Activated T-helper 1 cell treated with anti-CD3 and anti-CD28 coated beads, Interleukin-12 subunit alpha, Interleukin-12 subunit beta, Interleukin-2, Interleukin-4 antibody, amounts not matched to agents 30 ng/mL and 10 ng/mL and 1 ng/mL, durations not matched to agents 14 hours and 24 hours and 36 hours (primary cell): ENCODE measurements at regions of chr1 and their contacts with region 1.

Region 1: GRCh38 chr1:89611721-89612120 is 21.2 kb upstream of the LRRC8C start:
- DNase-seq: no peak
- H3K4me3 Mint-ChIP-seq: peak overlapping the region; percentile 73
- H3K27ac Mint-ChIP-seq: peak overlapping the region; percentile 99
- H3K4me1 Mint-ChIP-seq: peaks cover 88% of the 10 kb centered on the region
- H3K27me3 Mint-ChIP-seq: no peaks in the 10 kb centered on the region

Region 2: GRCh38 chr1:89545264-89546038 is 66.3 kb before region 1 on chr1:
- intact Hi-C with region 1: loop called (anchors 1 kb)
- DNase-seq: peak; percentile 39
- H3K4me3 Mint-ChIP-seq: peak overlapping the region; percentile 12
- H3K27ac Mint-ChIP-seq: peak overlapping the region; percentile 90
- H3K4me1 Mint-ChIP-seq: peaks cover 85% of the 10 kb centered on the region
- H3K27me3 Mint-ChIP-seq: peaks cover 2% of the 10 kb centered on the region

Region 3: GRCh38 chr1:89556726-89557444 is 54.8 kb before region 1 on chr1:
- intact Hi-C with region 1: no loop called
- DNase-seq: no peak
- H3K4me3 Mint-ChIP-seq: no peak overlapping the region
- H3K27ac Mint-ChIP-seq: peak overlapping the region; percentile 55
- H3K4me1 Mint-ChIP-seq: peaks cover 64% of the 10 kb centered on the region
- H3K27me3 Mint-ChIP-seq: no peaks in the 10 kb centered on the region

Region 4: GRCh38 chr1:89581859-89582258 is 29.9 kb before region 1 on chr1:
- intact Hi-C with region 1: no loop called
- DNase-seq: no peak
- H3K4me3 Mint-ChIP-seq: no peak overlapping the region
- H3K27ac Mint-ChIP-seq: peak overlapping the region; percentile 91
- H3K4me1 Mint-ChIP-seq: peaks cover 53% of the 10 kb centered on the region
- H3K27me3 Mint-ChIP-seq: no peaks in the 10 kb centered on the region

Region 5: GRCh38 chr1:89627596-89627962 is 15.9 kb after region 1 on chr1:
- intact Hi-C with region 1: loop called (anchors 1 kb)
- DNase-seq: no peak
- H3K4me3 Mint-ChIP-seq: no peak overlapping the region
- H3K27ac Mint-ChIP-seq: no peak overlapping the region
- H3K4me1 Mint-ChIP-seq: peaks cover 69% of the 10 kb centered on the region
- H3K27me3 Mint-ChIP-seq: no peaks in the 10 kb centered on the region

Region 6: DNA sequence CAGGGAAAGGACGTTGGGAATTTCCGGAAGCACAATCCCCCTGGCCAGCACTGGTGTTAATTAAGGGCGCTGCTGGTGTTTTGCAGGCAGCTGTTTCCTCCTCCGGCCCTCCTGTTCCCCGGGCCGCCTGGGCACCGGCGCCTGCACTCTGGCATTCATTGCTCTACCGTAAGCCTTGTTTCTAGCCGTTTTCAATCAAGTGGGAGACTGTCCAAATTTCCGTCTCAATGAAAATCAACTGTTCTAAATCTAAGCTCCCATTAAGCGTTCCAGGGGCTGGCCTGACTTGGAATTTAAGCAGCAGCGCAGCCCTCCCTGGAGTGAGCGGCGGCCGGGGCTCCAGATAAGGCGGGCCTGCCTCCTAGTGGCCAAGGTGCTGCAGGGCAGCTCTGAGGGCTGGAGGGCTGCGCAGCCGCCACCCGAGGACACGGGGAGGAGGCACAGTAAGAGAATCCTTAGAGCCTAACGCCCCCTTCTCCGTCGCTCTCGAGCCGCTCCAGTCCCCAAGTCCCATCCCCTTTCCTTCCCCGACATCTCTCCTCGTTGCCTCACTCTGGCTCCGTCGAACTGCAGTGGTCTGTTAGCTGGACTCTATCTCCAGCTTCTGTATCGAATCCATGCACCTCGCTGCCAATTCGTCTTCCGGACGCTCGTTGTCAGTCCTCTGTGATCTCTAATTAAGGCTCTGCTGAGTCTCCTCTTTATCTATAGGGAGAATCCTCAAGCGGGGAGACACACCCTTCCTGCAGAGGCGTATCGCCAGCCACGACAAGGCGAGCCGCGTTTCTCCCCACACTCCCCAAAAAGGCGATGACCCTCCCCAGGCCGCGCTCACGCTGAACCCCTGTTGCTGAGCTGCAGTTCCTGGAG is 151.3 kb after region 1 on chr1:
- intact Hi-C with region 1: loop called (anchors 1 kb)
- DNase-seq: peak; percentile 78
- H3K4me3 Mint-ChIP-seq: peak overlapping the region; percentile 92
- H3K27ac Mint-ChIP-seq: peak overlapping the region; percentile 93
- H3K4me1 Mint-ChIP-seq: peaks cover 63% of the 10 kb centered on the region
- H3K27me3 Mint-ChIP-seq: no peaks in the 10 kb centered on the region

Region 7: DNA sequence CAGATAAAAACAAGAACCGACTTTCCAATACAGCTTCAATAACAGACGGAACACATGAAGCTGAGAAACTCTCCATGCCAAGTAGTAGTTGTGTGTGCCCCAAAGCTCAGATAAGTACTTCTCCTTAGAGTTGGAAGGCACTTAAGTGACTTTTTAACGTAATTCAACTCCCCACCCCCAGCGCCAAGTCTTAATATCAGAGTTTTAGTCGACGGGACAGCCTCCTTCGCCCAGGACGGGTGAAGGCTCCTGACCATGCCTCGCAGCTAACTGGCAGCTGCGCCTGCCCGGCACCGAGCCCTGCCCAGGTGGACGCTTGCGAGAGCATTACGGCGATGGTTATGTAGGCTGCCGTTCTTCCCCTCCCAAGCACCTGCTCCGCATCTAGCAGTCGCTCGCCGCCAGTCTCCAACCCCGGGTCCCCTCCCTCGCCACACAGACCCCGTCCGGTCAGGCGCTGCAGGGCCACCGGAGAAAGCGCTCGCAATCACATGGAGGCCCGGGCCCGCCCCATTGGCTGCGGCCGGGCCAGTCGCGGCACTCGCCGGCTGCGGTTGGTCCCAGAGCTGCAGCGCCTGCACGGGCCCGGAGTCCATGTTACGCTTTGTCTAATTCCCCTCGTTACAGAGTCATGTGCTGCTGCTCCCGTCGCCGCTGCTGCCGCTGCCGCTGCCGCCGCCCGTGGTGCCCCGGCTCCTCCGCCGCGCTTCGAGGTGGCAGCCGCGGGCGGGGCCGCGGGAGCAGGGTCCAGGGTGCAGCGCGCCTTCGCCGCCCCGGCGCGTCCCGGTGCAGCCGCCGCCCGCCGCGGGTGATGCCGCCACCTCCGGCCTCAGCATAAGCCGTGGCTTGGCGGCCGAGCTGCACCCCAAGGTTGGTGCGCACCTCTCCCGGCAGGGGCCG is 209.0 kb after region 1 on chr1 and contains the start of gene LRRC8D:
- intact Hi-C with region 1: loop called (anchors 1 kb)
- DNase-seq: peak; percentile 72
- H3K4me3 Mint-ChIP-seq: peak within 1 kb of the TSS; percentile 84
- H3K27ac Mint-ChIP-seq: peak within 1 kb of the TSS; percentile 68
- H3K4me1 Mint-ChIP-seq: peaks cover 15% of the 10 kb centered on the region
- H3K27me3 Mint-ChIP-seq: peaks cover 8% of the 10 kb centered on the region
- total RNA-seq, gene LRRC8D: 43.3 and 45.0 TPM in 2 replicates